ENCODE measurements at regions of chr12 and their contacts with region 1.

Region 1: GRCh38 chr12:17108877-17109541 is 503.0 kb upstream of the LMO3 start:
- DNase-seq: peak; percentile 52 to 68
- H3K4me3 ChIP-seq: no peak overlapping the region
- H3K27ac ChIP-seq: no peak overlapping the region
- H3K4me1 ChIP-seq: peaks cover 13% of the 10 kb centered on the region; the same call in 1 of the 2 replicates
- H3K27me3 ChIP-seq: no peaks in the 10 kb centered on the region
- CTCF ChIP-seq: no peak

Region 2: DNA sequence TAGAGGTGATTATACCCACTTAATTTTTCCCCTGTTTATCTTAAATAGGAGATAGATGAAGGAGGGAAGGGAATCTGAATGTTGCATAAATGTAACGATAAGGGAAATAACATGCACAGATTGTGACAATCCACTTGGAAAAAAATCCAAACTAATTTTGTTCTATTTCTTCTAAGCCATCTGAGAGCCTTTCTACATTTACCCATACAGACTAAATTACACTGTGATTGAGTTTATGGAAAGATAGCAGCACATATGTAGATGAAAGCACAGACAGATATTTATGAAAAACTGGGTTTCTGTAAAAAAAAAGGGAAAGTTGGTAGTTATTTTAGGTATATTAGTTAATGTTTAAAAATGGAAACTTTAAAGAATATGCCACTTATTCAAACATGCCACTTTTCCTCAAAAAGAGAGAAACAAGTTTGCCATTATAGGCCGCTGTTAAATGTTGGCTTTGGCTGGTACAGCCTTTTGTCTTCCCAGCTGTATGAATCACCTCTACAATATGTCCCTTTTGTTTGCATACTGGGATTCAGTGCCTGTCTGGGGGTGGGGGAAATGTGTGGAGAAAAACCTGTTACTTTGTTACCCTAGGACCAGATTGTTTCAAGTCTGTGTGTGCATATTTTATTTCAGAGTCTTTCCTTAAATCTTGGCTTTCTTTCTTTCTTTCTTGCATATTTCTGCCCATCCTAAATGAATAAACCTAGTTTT is 32.8 kb before region 1 on chr12:
- CTCF ChIA-PET with region 1: no interaction called
- POLR2A ChIA-PET with region 1: no interaction called
- intact Hi-C with region 1: loop called (anchors 5 kb)
- DNase-seq: peak in 1 of 2 experiments; percentile 67
- H3K4me3 ChIP-seq: no peak overlapping the region
- H3K27ac ChIP-seq: no peak overlapping the region
- H3K4me1 ChIP-seq: no peaks in the 10 kb centered on the region
- H3K27me3 ChIP-seq: no peaks in the 10 kb centered on the region
- CTCF ChIP-seq: no peak

Region 3: GRCh38 chr12:17139931-17140330 is 30.9 kb after region 1 on chr12:
- CTCF ChIA-PET with region 1: interaction called, 5 read pairs
- POLR2A ChIA-PET with region 1: no interaction called
- intact Hi-C with region 1: loop called (anchors 1 kb)
- DNase-seq: peak; percentile 51 to 72
- H3K4me3 ChIP-seq: no peak overlapping the region
- H3K27ac ChIP-seq: no peak overlapping the region
- H3K4me1 ChIP-seq: no peaks in the 10 kb centered on the region
- H3K27me3 ChIP-seq: no peaks in the 10 kb centered on the region
- CTCF ChIP-seq: no peak

Measured in PC-9 (cell line).